Posterior vena cava (tissue), 2 donors: ENCODE measurements at regions of chr7 and their contacts with region 1.

Region 1: GRCh38 chr7:24979863-24980533 is at the start of gene OSBPL3:
- DNase-seq: peak; percentile 98
- total RNA-seq, gene OSBPL3: 5.0 to 9.1 TPM

Region 2: GRCh38 chr7:24825931-24826661 is 153.9 kb before region 1 on chr7:
- intact Hi-C with region 1: loop called in 1 of 2 experiments (anchors 5 kb)
- DNase-seq: no peak

Region 3: GRCh38 chr7:25037325-25037724 is 57.3 kb after region 1 on chr7:
- intact Hi-C with region 1: no loop called
- DNase-seq: no peak